ENCODE measurements at regions of chr2 and their contacts with region 1.

Region 1: DNA sequence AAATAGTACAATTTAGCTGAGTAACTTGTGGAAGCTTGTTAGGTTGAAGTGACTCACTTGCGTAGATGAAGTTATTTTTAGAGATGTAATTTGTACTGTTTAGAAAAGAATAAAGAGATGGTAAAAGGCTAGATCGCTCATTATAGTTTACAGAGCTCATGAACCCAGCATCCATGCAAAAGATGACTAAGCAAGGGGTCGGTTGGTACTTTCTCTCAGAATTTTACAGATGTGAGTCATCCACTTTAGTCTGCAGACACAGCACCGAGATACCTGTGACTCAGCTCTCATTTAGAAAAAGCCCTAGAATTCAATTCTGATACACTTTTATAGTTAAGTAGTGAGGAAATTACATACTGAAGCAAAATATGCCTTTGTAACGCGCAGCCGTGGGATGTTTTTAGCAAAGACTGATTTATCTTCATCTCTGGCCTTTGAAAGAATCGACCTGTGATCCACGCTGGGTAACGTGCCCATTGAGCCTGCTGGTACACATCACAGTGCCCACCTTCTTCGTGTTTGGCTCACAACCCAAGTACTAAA is 116.5 kb upstream of the FOSL2 start:
- DNase-seq: peak; percentile 50
- H3K4me3 Mint-ChIP-seq: no peak overlapping the region
- H3K27ac Mint-ChIP-seq: peak overlapping the region; percentile 59
- H3K4me1 Mint-ChIP-seq: peaks cover 48% of the 10 kb centered on the region
- H3K27me3 Mint-ChIP-seq: no peaks in the 10 kb centered on the region

Region 2: DNA sequence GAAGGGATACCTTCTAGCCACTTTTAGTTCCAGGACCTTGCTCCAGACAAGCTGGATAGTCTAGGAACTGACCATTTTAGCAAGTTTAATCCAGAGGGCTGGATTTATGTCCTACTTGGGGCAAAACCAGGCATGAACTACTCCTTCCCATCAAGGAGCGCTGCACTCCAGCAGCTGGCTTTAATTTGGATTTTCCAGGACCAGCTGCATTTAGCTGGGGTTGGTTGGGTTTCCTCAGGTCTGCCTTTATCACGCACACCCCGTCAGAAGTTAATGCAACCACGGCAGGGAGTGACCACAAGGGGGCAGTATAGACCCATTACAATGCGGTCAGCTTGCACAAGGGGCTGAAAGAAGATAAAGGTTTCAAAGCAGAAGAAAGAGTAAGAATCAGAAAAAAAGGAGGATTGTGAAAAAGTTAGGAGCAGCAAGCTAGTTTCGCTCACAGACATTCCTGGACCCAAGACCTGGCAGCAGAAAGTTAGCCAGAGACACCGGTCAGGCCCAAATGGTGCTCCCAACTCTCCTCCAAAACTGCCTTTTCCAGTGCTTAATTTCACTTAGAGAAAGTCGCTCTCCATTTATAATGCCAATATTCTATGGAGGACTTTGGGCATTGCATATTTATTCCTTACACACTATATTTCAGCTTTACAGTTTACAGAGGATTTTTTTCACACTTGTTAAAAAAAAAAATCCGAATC is 572.4 kb before region 1 on chr2:
- CTCF ChIA-PET with region 1: interaction called, 3 read pairs
- POLR2A ChIA-PET with region 1: no interaction called
- intact Hi-C with region 1: loop called (anchors 10 kb)
- DNase-seq: peak; percentile 92
- H3K4me3 Mint-ChIP-seq: no peak overlapping the region
- H3K27ac Mint-ChIP-seq: peak overlapping the region; percentile 10
- H3K4me1 Mint-ChIP-seq: peaks cover 26% of the 10 kb centered on the region
- H3K27me3 Mint-ChIP-seq: no peaks in the 10 kb centered on the region

Region 3: DNA sequence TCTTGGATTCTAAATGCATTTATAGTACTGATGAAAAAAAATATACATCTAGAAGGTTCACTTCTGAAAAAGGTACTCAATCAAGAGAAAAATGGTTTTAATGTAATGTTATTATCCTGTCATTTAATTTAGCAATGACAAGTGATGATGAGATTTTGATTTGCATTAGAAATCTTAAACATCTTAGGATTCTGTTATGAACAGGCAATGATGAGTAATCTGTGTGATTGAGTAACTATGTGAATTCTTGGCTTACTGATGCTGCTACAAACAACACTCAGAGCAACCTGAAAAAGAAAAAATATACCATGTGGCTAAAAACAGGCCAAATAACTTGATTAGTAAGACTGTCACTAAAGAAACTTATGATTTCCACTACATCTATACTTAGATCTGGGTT is 416.0 kb before region 1 on chr2:
- CTCF ChIA-PET with region 1: no interaction called
- POLR2A ChIA-PET with region 1: no interaction called
- intact Hi-C with region 1: loop called (anchors 1 kb)
- DNase-seq: no peak
- H3K4me3 Mint-ChIP-seq: no peak overlapping the region
- H3K27ac Mint-ChIP-seq: peak overlapping the region; percentile 67
- H3K4me1 Mint-ChIP-seq: peaks cover 52% of the 10 kb centered on the region
- H3K27me3 Mint-ChIP-seq: no peaks in the 10 kb centered on the region

Region 4: GRCh38 chr2:28004086-28004485 is 272.1 kb before region 1 on chr2:
- CTCF ChIA-PET with region 1: no interaction called
- POLR2A ChIA-PET with region 1: no interaction called
- intact Hi-C with region 1: loop called (anchors 10 kb)
- DNase-seq: peak; percentile 36
- H3K4me3 Mint-ChIP-seq: no peak overlapping the region
- H3K27ac Mint-ChIP-seq: peak overlapping the region; percentile 79
- H3K4me1 Mint-ChIP-seq: peaks cover 36% of the 10 kb centered on the region
- H3K27me3 Mint-ChIP-seq: no peaks in the 10 kb centered on the region

Region 5: GRCh38 chr2:28250006-28250405 is 26.1 kb before region 1 on chr2:
- CTCF ChIA-PET with region 1: interaction called, 4 read pairs
- POLR2A ChIA-PET with region 1: interaction called, 6 read pairs
- intact Hi-C with region 1: loop called (anchors 1 kb)
- DNase-seq: no peak
- H3K4me3 Mint-ChIP-seq: no peak overlapping the region
- H3K27ac Mint-ChIP-seq: no peak overlapping the region
- H3K4me1 Mint-ChIP-seq: peaks cover 48% of the 10 kb centered on the region
- H3K27me3 Mint-ChIP-seq: no peaks in the 10 kb centered on the region